ENCODE measurements at regions of chr2 and their contacts with region 1.

Region 1: GRCh38 chr2:24382363-24383073 is 22.2 kb upstream of the ITSN2 start:
- DNase-seq: peak in 8 of 9 donors; percentile 37 to 75 (median 66)
- ATAC-seq: peak; percentile 95
- H3K4me3 ChIP-seq: no peak overlapping the region
- H3K4me3 Mint-ChIP-seq: no peak overlapping the region
- H3K27ac ChIP-seq: no peak overlapping the region
- H3K27ac Mint-ChIP-seq: no peak overlapping the region
- H3K4me1 ChIP-seq: no peaks in the 10 kb centered on the region
- H3K4me1 Mint-ChIP-seq: peaks cover 0 to 2% (median 0%) of the 10 kb centered on the region in 7 donors
- H3K27me3 ChIP-seq: no peaks in the 10 kb centered on the region
- H3K27me3 Mint-ChIP-seq: peaks cover 0 to 3% (median 0%) of the 10 kb centered on the region in 5 donors

Region 2: GRCh38 chr2:23096905-23097602 is 1285.5 kb before region 1 on chr2:
- CTCF ChIA-PET with region 1: no interaction called
- POLR2A ChIA-PET with region 1: no interaction called
- intact Hi-C with region 1: no loop called
- DNase-seq: no peak
- ATAC-seq: no peak
- H3K4me3 ChIP-seq: no peak overlapping the region
- H3K4me3 Mint-ChIP-seq: no peak overlapping the region
- H3K27ac ChIP-seq: no peak overlapping the region
- H3K27ac Mint-ChIP-seq: no peak overlapping the region
- H3K4me1 ChIP-seq: no peaks in the 10 kb centered on the region
- H3K4me1 Mint-ChIP-seq: no peaks in the 10 kb centered on the region
- H3K27me3 ChIP-seq: no peaks in the 10 kb centered on the region
- H3K27me3 Mint-ChIP-seq: peaks cover 0 to 21% (median 5%) of the 10 kb centered on the region in 5 donors

Region 3: DNA sequence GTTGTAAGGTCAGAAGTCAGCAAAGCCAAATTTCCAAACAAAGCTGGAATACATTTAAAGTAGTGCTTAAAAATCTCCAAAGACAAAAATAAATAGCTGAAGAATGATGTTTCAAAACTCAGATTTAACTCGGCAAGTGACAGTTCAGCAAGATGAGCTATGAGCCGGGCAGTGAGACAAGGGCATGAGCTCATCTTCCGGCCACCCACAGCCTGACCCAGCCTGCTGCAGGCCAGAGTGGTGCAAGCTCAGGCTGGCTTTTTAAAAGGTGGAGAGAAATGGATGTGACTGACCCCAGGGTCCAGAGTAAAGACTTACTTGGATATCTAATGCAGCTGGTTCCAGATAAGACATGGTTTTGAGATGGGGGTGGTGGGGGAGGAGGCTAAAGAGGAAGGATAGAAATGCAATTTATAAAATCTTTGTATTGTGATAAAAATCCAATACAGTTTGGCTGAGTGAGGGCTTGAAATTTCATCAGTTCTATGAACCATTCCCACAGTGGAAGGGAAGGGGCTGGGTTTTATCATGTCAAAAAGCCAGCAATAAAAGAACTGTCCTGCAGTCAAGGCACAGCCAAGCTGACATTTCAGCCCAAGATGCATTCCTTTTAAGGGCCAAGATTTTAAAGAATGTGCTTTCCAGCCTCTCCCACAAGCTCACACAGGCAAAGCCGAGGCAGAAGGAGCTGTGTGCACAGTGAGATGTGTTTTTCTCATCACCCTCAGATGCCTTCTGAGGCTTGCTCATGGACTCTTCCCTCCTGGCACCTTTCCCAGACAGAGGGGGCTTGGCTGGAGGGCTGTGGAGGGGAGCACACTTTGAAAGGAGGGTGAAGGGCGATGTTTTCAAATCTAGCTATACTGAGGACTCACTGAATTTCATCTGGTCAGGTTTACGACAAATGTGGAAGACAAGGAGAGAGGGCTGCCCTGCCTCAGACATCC is 1095.5 kb before region 1 on chr2:
- CTCF ChIA-PET with region 1: no interaction called
- POLR2A ChIA-PET with region 1: no interaction called
- intact Hi-C with region 1: no loop called
- DNase-seq: no peak
- ATAC-seq: no peak
- H3K4me3 ChIP-seq: no peak overlapping the region
- H3K4me3 Mint-ChIP-seq: no peak overlapping the region
- H3K27ac ChIP-seq: no peak overlapping the region
- H3K27ac Mint-ChIP-seq: no peak overlapping the region
- H3K4me1 ChIP-seq: no peaks in the 10 kb centered on the region
- H3K4me1 Mint-ChIP-seq: no peaks in the 10 kb centered on the region
- H3K27me3 ChIP-seq: no peaks in the 10 kb centered on the region
- H3K27me3 Mint-ChIP-seq: peaks cover 0 to 28% (median 3%) of the 10 kb centered on the region in 5 donors

Region 4: DNA sequence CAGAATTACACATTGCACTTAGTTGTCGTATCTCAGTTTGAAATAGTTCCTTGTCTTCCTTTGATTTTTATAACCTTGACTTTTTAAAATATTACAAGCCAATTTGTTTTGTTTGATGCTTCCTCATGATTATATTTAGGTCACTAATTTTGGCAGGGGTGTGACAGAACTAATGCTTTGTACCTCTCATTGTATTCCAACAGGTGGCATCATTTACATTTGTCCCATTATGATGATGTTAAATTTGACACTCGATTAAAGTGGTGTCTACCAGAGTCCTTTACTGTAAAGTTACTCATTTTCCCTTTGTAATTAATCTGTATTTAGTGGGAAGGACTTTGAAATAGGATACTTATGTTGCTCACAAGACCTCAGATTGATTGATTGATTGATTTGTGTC is 394.1 kb before region 1 on chr2:
- CTCF ChIA-PET with region 1: no interaction called
- POLR2A ChIA-PET with region 1: no interaction called
- intact Hi-C with region 1: loop called in 1 of 2 experiments (anchors 1 kb)
- DNase-seq: peak in 4 of 9 donors; percentile 8 to 26 (median 23)
- ATAC-seq: peak; percentile 60
- H3K4me3 ChIP-seq: no peak overlapping the region
- H3K4me3 Mint-ChIP-seq: no peak overlapping the region
- H3K27ac ChIP-seq: no peak overlapping the region
- H3K27ac Mint-ChIP-seq: peak overlapping the region in 1 of 9 donors; percentile 49
- H3K4me1 ChIP-seq: no peaks in the 10 kb centered on the region
- H3K4me1 Mint-ChIP-seq: peaks cover 0 to 3% (median 0%) of the 10 kb centered on the region in 7 donors
- H3K27me3 ChIP-seq: no peaks in the 10 kb centered on the region
- H3K27me3 Mint-ChIP-seq: no peaks in the 10 kb centered on the region

Region 5: GRCh38 chr2:24228470-24228869 is 154.0 kb before region 1 on chr2:
- CTCF ChIA-PET with region 1: interaction called, 4 read pairs
- POLR2A ChIA-PET with region 1: interaction called, 4 read pairs
- intact Hi-C with region 1: loop called (anchors 1 to 2 kb)
- DNase-seq: no peak
- ATAC-seq: no peak
- H3K4me3 ChIP-seq: no peak overlapping the region
- H3K4me3 Mint-ChIP-seq: no peak overlapping the region
- H3K27ac ChIP-seq: no peak overlapping the region
- H3K27ac Mint-ChIP-seq: no peak overlapping the region
- H3K4me1 ChIP-seq: no peaks in the 10 kb centered on the region
- H3K4me1 Mint-ChIP-seq: no peaks in the 10 kb centered on the region
- H3K27me3 ChIP-seq: no peaks in the 10 kb centered on the region
- H3K27me3 Mint-ChIP-seq: no peaks in the 10 kb centered on the region

Region 6: DNA sequence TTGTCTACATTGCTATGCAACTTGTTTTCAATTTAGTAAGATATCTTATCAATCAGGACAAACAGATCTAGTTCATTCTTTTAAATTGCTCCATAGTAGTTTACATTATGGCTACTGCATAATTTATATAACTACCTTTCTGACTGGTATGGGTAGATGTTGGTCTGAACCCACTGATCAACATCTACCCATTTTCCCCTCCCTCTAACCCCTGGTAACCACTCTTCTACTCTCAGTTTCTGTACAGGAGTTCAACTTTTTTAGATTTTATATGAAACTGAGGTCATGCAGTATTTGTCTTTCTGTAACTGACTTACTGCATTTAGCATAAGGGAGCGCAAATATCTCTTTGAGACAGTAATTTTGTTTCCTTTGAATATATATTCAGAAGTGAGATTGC is 95.3 kb before region 1 on chr2:
- CTCF ChIA-PET with region 1: no interaction called
- POLR2A ChIA-PET with region 1: interaction called, 3 read pairs
- intact Hi-C with region 1: loop called in 1 of 2 experiments (anchors 5 kb)
- DNase-seq: no peak
- ATAC-seq: no peak
- H3K4me3 ChIP-seq: no peak overlapping the region
- H3K4me3 Mint-ChIP-seq: no peak overlapping the region
- H3K27ac ChIP-seq: no peak overlapping the region
- H3K27ac Mint-ChIP-seq: peak overlapping the region in 3 of 9 donors; percentile 31 to 62 (median 38)
- H3K4me1 ChIP-seq: no peaks in the 10 kb centered on the region
- H3K4me1 Mint-ChIP-seq: peaks cover 0 to 6% (median 0%) of the 10 kb centered on the region in 7 donors
- H3K27me3 ChIP-seq: no peaks in the 10 kb centered on the region
- H3K27me3 Mint-ChIP-seq: no peaks in the 10 kb centered on the region

Region 7: DNA sequence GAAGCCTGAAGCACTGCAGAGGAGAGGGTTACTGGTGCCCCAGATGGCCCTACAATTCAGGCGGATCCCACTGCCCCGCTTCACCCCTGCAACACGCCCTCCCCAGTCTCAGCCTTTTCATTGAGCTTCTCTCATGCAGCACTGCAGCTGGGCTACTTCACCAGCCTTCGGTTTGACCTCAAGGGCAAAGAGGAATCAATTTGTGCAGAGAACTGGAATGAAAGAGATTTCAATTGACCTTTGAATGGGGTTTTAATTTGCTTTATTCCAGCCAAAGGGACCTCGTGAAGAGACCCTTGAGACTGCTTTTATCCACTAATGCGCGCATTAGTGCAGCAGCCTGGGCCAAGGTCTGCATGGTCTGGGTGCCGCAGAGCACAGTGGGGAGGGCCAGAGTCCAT is 794.7 kb after region 1 on chr2:
- CTCF ChIA-PET with region 1: no interaction called
- POLR2A ChIA-PET with region 1: no interaction called
- intact Hi-C with region 1: no loop called
- DNase-seq: no peak
- ATAC-seq: no peak
- H3K4me3 ChIP-seq: no peak overlapping the region
- H3K4me3 Mint-ChIP-seq: no peak overlapping the region
- H3K27ac ChIP-seq: no peak overlapping the region
- H3K27ac Mint-ChIP-seq: no peak overlapping the region
- H3K4me1 ChIP-seq: no peaks in the 10 kb centered on the region
- H3K4me1 Mint-ChIP-seq: peaks cover 0 to 6% (median 3%) of the 10 kb centered on the region in 7 donors
- H3K27me3 ChIP-seq: no peaks in the 10 kb centered on the region
- H3K27me3 Mint-ChIP-seq: peaks cover 15 to 37% (median 18%) of the 10 kb centered on the region in 5 donors

Measured in naive thymus-derived CD4-positive, alpha-beta T cell (primary cell).